Ascending aorta (tissue), 2 donors: ENCODE measurements at regions of chr10 and their contacts with region 1.

Region 1: GRCh38 chr10:31864834-31865518 is 63.7 kb downstream of the ARHGAP12 start:
- DNase-seq: no peak
- H3K4me3 ChIP-seq: no peak overlapping the region
- H3K27ac ChIP-seq: no peak overlapping the region
- H3K4me1 ChIP-seq: peaks cover 3 to 10% of the 10 kb centered on the region in 2 donors
- H3K27me3 ChIP-seq: no peaks in the 10 kb centered on the region
- CTCF ChIP-seq: no peak

Region 2: DNA sequence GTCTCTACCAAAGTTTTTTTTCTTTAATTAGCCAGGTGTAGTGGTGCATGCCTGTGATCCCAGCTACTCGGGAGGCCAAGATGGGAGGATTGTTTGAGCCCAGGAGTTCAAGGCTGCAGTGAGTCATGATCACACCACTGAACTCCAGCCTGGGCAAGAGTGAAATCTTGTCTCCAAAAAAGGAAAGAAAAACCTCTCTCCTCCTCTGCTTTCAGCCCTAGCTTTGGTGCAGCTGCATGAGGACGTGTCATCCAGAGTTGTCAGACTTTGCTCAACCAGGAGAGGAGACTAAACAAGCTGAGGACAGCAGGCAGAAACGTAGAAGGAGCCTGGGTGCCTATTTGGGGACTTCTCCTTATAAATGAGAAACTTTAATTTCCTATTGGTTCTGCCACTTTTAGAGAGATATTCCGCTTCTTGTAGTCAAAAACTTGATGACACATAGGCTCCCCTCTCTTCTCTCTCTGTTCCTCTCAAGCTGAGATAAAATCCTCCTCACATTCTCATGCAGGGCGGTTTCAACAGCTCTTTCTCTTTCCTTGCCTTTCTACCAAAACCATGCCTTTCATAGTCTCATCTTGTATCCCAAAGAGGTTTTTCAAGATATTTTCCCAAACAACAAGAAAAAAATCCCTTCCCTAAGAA is 141.7 kb before region 1 on chr10:
- intact Hi-C with region 1: no loop called
- DNase-seq: no peak
- H3K4me3 ChIP-seq: no peak overlapping the region
- H3K27ac ChIP-seq: no peak overlapping the region
- H3K4me1 ChIP-seq: no peaks in the 10 kb centered on the region
- H3K27me3 ChIP-seq: no peaks in the 10 kb centered on the region
- CTCF ChIP-seq: no peak

Region 3: GRCh38 chr10:31782701-31783100 is 82.3 kb before region 1 on chr10:
- intact Hi-C with region 1: no loop called
- DNase-seq: no peak
- H3K4me3 ChIP-seq: no peak overlapping the region
- H3K27ac ChIP-seq: no peak overlapping the region
- H3K4me1 ChIP-seq: no peaks in the 10 kb centered on the region
- H3K27me3 ChIP-seq: no peaks in the 10 kb centered on the region
- CTCF ChIP-seq: no peak

Region 4: GRCh38 chr10:31947144-31947926 is 82.4 kb after region 1 on chr10:
- intact Hi-C with region 1: loop called (anchors 5 kb)
- DNase-seq: no peak
- H3K4me3 ChIP-seq: peak overlapping the region in 1 of 2 donors; percentile 41
- H3K27ac ChIP-seq: peak overlapping the region; percentile 28 to 60
- H3K4me1 ChIP-seq: peaks cover 0 to 13% of the 10 kb centered on the region in 2 donors
- H3K27me3 ChIP-seq: no peaks in the 10 kb centered on the region
- CTCF ChIP-seq: peak; percentile 29 to 57 (median 30)

Region 5: DNA sequence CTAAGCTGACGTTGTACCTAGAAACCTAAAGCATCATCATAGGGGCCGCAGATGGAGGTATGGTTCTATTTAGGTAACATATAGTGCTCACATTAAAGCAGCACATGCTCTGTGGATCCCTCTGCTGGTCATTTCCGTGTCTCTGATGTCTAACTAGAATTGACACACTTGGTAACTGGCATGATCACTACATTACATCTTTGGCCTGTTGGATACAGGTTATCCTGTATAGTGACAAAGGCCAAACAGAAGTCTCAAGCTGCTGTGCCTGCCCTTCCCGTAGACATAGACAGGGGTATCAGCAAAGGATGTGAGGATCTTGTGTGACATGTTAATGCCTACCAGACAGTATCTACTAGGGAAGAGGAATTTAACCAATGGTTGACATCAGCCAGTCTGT is 140.1 kb after region 1 on chr10:
- intact Hi-C with region 1: loop called (anchors 5 kb)
- DNase-seq: peak in 1 of 2 donors; percentile 67
- H3K4me3 ChIP-seq: no peak overlapping the region
- H3K27ac ChIP-seq: peak overlapping the region in 1 of 2 donors; percentile 32
- H3K4me1 ChIP-seq: no peaks in the 10 kb centered on the region
- H3K27me3 ChIP-seq: no peaks in the 10 kb centered on the region
- CTCF ChIP-seq: peak; percentile 37 to 47 (median 41)

Region 6: GRCh38 chr10:32207544-32207943 is 342.6 kb after region 1 on chr10:
- intact Hi-C with region 1: loop called (anchors 5 kb)
- DNase-seq: peak; percentile 12 to 69
- H3K4me3 ChIP-seq: no peak overlapping the region
- H3K27ac ChIP-seq: no peak overlapping the region
- H3K4me1 ChIP-seq: no peaks in the 10 kb centered on the region
- H3K27me3 ChIP-seq: no peaks in the 10 kb centered on the region
- CTCF ChIP-seq: peak; percentile 61 to 76 (median 63)